Ovary (tissue), 10 donors: ENCODE measurements at regions of chr9 and their contacts with region 1.

Region 1: GRCh38 chr9:101342595-101342994 is 42.2 kb downstream of the BAAT start:
- DNase-seq: no peak
- H3K4me3 ChIP-seq: no peak overlapping the region
- H3K27ac ChIP-seq: no peak overlapping the region
- H3K4me1 ChIP-seq: no peaks in the 10 kb centered on the region
- H3K27me3 ChIP-seq: no peaks in the 10 kb centered on the region
- CTCF ChIP-seq: no peak
- EP300 ChIP-seq: no peak
- POLR2A ChIP-seq: no peak

Region 2: GRCh38 chr9:101184813-101185278 is 157.7 kb before region 1 on chr9:
- intact Hi-C with region 1: loop called in 1 of 4 experiments (anchors 2 kb)
- DNase-seq: no peak
- H3K4me3 ChIP-seq: no peak overlapping the region
- H3K27ac ChIP-seq: no peak overlapping the region
- H3K4me1 ChIP-seq: no peaks in the 10 kb centered on the region
- H3K27me3 ChIP-seq: no peaks in the 10 kb centered on the region
- CTCF ChIP-seq: no peak
- EP300 ChIP-seq: no peak
- POLR2A ChIP-seq: no peak